Right ventricle myocardium inferior (tissue), 1 donor: ENCODE measurements at regions of chr13 and their contacts with region 1.

Region 1: GRCh38 chr13:35818633-35819067 is 312.5 kb downstream of the DCLK1 start:
- DNase-seq: no peak
- ATAC-seq: peak; percentile 59

Region 2: GRCh38 chr13:35210261-35210660 is 608.4 kb before region 1 on chr13:
- intact Hi-C with region 1: loop called (anchors 2 kb)
- DNase-seq: no peak
- ATAC-seq: no peak